ENCODE measurements at regions of chr12 and their contacts with region 1.

Region 1: GRCh38 chr12:109284392-109284791 is 24.7 kb downstream of the FOXN4 start:
- DNase-seq: no peak
- ATAC-seq: no peak

Region 2: GRCh38 chr12:109214131-109214530 is 70.3 kb before region 1 on chr12:
- intact Hi-C with region 1: loop called (anchors 2 kb)
- DNase-seq: no peak
- ATAC-seq: no peak